ENCODE measurements at regions of chr11 and their contacts with region 1.

Region 1: GRCh38 chr11:80886684-80887083 is 1445.9 kb upstream of the TENM4 start:
- DNase-seq: no peak
- ATAC-seq: no peak
- H3K4me3 ChIP-seq: no peak overlapping the region
- H3K4me3 Mint-ChIP-seq: no peak overlapping the region
- H3K27ac ChIP-seq: no peak overlapping the region
- H3K27ac Mint-ChIP-seq: no peak overlapping the region
- H3K4me1 ChIP-seq: no peaks in the 10 kb centered on the region
- H3K4me1 Mint-ChIP-seq: no peaks in the 10 kb centered on the region
- H3K27me3 ChIP-seq: no peaks in the 10 kb centered on the region
- H3K27me3 Mint-ChIP-seq: no peaks in the 10 kb centered on the region

Region 2: GRCh38 chr11:80860632-80861031 is 26.1 kb before region 1 on chr11:
- CTCF ChIA-PET with region 1: interaction called in 1 of 2 experiments, 10 read pairs
- POLR2A ChIA-PET with region 1: no interaction called
- DNase-seq: no peak
- ATAC-seq: no peak
- H3K4me3 ChIP-seq: no peak overlapping the region
- H3K4me3 Mint-ChIP-seq: no peak overlapping the region
- H3K27ac ChIP-seq: no peak overlapping the region
- H3K27ac Mint-ChIP-seq: no peak overlapping the region
- H3K4me1 ChIP-seq: no peaks in the 10 kb centered on the region
- H3K4me1 Mint-ChIP-seq: no peaks in the 10 kb centered on the region
- H3K27me3 ChIP-seq: no peaks in the 10 kb centered on the region
- H3K27me3 Mint-ChIP-seq: no peaks in the 10 kb centered on the region

Region 3: GRCh38 chr11:80937842-80938241 is 51.2 kb after region 1 on chr11:
- CTCF ChIA-PET with region 1: no interaction called
- POLR2A ChIA-PET with region 1: no interaction called
- DNase-seq: no peak
- ATAC-seq: no peak
- H3K4me3 ChIP-seq: no peak overlapping the region
- H3K4me3 Mint-ChIP-seq: no peak overlapping the region
- H3K27ac ChIP-seq: no peak overlapping the region
- H3K27ac Mint-ChIP-seq: no peak overlapping the region
- H3K4me1 ChIP-seq: no peaks in the 10 kb centered on the region
- H3K4me1 Mint-ChIP-seq: no peaks in the 10 kb centered on the region
- H3K27me3 ChIP-seq: no peaks in the 10 kb centered on the region
- H3K27me3 Mint-ChIP-seq: no peaks in the 10 kb centered on the region

Measured in T-cell (primary cell).